GM18951 (cell line): ENCODE measurements at regions of chr1 and their contacts with region 1.

Region 1: DNA sequence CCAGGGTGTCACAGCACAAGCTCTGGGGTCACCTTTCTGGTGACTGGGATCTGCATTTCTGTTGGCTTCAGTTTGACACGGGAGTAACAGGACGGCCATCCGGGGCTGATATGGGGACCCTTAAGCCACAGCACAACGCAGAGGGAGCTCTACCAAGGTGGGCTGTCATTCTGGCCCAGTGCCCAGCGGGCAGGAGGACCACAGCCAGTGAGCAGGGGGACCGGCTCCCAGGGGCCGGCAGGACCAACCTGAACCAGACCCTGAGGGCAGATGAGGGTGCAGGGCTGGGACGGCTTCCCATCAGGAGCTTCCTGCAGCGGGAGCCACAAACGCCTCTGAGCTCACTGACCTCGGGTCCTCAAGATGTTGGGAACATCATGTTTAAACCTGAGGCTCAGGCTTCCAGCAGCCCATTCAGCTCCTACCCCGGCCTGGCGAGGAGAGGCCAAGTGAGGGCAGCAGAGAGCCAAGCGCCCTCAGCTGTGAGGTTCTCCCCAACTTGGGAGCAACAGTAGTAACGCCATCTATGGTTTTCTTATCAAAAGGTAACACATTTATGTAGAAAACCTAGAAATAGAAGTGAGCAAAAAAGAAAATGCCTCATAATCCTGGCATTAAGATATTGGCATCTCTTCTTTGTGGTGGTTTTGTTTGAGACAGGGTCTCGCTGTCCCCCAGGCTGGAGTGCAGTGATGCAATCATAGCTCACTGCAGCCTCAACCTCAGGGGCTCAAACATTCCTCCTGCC is 26.8 kb downstream of the TMEM201 start:
- POLR2A ChIP-seq: no peak

Region 2: DNA sequence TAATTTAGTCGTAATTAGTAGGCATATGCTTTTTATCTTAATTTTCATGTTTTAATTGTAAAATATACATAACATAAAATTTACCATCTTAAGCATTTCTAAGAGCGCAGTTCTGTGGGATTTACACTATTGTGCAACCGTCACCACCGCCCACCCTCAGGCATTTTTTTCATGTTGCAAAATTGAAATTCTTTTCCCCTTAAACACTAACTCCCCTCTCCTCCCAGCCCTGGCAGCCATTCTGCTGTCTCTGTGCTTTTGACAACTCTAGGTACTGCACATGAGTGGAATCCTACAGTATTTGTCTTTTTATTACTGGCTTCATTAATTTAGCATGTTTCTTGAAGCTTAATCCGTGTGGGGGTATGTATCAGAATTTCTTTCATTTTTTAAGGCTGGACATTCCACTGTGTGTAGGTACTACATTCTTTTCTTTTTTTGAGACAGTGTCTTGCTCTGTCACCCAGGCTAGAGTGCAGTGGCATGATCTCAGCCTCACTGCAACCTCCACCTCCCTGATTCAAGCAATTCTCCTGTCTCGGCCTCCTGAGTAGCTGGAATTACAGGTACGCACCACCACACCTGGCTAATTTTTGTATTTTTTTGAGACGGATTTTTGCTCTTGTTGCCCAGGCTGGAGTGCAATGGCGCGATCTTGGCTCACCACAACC is 44.0 kb after region 1 on chr1:
- in situ Hi-C with region 1: no loop called
- POLR2A ChIP-seq: no peak

Region 3: DNA sequence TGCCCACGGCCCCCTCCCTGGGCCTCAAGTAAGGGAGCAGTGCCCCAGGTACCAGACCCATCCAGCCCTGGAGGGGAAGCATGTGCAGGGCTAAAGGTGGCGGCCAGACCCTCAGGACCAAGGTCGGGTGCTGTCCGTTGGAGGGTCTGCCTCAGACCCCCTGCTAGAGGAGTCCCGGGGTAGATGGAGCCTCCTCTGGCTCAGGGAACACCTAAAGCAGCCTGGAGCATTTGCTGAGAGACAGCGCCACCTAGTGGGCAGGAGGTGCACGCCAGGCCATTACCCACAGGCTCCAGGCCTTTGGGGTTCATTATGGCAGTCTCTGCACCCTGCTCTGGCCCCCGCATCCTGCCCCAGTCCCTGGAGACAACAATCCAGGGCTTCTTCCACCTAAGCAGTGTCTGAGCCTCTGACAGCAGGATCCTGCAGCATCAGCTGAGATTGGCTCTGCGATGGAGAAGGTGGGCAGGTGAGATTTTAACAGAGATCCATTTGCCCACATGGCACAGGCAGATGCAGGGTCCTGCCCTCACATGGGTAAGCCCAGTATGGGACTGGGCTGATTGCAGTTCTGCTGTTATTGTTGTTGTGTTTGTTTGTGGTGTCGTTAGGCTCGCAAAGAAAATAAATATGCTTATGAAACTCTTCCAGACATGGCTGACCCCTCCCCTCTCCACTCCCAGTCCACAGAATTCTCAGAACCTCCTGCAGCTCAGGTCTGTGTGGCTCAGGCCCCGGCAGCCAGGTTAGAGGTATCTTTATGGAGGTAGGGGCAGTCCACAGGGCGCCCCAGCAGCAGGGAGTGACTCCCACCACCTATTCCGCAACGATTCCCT is 252.1 kb after region 1 on chr1:
- in situ Hi-C with region 1: loop called (anchors 25 kb)
- POLR2A ChIP-seq: no peak